ENCODE measurements at regions of chr1 and their contacts with region 1.

Region 1: GRCh38 chr1:110829955-110830553 is 42.9 kb upstream of the CD53 start:
- DNase-seq: peak; percentile 1 to 53
- H3K4me3 ChIP-seq: no peak overlapping the region
- H3K27ac ChIP-seq: no peak overlapping the region
- H3K4me1 ChIP-seq: no peaks in the 10 kb centered on the region
- H3K27me3 ChIP-seq: no peaks in the 10 kb centered on the region
- CTCF ChIP-seq: peak; percentile 92

Region 2: DNA sequence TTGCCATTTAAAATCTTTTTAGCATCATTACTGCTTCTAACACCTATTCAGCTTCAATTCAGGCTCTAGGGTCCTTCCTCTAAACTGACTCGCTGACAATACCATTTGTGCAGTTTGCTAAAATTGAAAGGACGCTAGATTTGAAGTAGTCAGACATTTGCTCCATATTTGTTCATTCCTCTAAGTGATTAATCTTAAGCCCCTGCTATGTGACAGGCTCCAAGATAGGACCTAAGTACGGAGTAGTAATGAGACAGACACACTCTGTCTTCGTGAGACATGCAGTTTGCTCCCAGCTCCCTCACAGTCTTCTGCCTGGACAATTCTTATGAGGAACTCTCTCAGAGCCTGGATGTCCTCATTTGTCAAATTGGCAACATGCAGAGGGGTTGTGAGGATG is 16.8 kb after region 1 on chr1:
- CTCF ChIA-PET with region 1: no interaction called
- POLR2A ChIA-PET with region 1: no interaction called
- intact Hi-C with region 1: no loop called
- DNase-seq: no peak
- H3K4me3 ChIP-seq: no peak overlapping the region
- H3K27ac ChIP-seq: no peak overlapping the region
- H3K4me1 ChIP-seq: no peaks in the 10 kb centered on the region
- H3K27me3 ChIP-seq: peaks cover 23% of the 10 kb centered on the region; the same call in 1 of the 2 replicates
- CTCF ChIP-seq: no peak

Region 3: DNA sequence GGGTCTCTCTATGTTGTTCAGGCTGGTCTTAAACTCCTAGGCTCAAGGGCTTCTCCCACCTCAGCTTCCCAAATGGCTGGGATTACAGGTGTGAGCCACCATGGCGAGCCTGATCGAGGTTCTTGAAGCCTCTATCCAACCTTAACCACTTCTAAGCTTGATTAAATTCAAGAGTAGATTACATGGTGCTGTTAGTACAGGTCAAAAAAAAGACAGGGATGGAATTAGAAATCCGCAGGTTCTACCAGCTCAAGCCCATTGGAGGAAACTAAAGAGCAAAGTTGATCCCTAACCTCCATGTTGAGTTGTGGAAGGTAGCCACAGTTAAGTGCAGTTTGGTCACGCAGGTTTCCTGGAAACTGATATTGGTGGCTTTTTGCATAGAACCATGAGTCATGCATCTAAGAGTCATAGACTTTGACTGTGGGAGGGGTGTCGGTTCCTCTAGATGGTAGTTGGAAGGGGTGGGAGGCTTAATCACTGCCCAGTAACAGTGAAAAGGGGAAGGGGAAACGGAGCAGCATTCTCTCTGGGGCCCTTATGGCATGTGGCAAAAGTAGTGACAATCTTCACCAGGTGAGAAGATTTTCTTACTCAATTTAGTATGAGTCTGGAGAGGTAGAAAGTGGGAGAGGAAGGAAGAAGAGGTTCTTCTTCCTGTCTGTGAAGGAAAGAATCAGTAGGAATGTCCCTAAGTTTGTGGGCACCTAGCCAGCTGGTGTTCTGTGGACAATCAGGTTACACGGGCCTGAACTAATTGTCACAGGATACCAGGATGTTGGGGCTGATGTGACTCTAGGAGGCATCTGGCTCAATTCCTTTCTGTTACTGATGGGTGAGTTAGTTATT is 49.9 kb after region 1 on chr1:
- CTCF ChIA-PET with region 1: no interaction called
- POLR2A ChIA-PET with region 1: no interaction called
- intact Hi-C with region 1: loop called (anchors 10 kb)
- DNase-seq: peak in 1 of 2 experiments; percentile 4
- H3K4me3 ChIP-seq: no peak overlapping the region
- H3K27ac ChIP-seq: no peak overlapping the region
- H3K4me1 ChIP-seq: no peaks in the 10 kb centered on the region
- H3K27me3 ChIP-seq: no peaks in the 10 kb centered on the region
- CTCF ChIP-seq: no peak

Region 4: DNA sequence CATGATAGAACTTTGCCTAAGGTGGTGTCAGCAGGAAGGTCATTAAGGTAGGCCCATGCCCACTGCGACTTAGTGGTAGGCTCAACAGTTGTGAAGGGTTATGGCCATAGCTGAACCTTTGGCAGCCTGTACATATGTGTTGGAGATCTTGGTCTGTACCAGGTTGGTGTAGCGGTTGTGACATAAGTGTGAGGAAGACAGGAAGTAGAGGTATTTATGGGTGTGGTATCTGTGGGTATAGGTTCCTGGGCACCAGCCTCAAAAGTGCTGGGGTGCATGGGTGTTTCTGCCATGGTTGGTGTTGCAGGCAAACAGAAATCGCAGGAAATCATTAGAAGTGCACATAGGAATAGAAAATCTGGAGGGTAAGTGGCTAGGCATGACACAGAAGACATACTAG is 152.3 kb after region 1 on chr1:
- CTCF ChIA-PET with region 1: no interaction called
- POLR2A ChIA-PET with region 1: no interaction called
- intact Hi-C with region 1: no loop called
- DNase-seq: peak in 1 of 2 experiments; percentile 29
- H3K4me3 ChIP-seq: no peak overlapping the region
- H3K27ac ChIP-seq: no peak overlapping the region
- H3K4me1 ChIP-seq: no peaks in the 10 kb centered on the region
- H3K27me3 ChIP-seq: peaks cover 41% of the 10 kb centered on the region
- CTCF ChIP-seq: no peak

Measured in PC-9 (cell line).